Prostate gland (tissue), 2 donors: ENCODE measurements at regions of chr18 and their contacts with region 1.

Region 1: GRCh38 chr18:23918401-23919032 is 96.0 kb upstream of the TTC39C start:
- DNase-seq: peak; percentile 73
- H3K4me3 ChIP-seq: no peak overlapping the region
- H3K27ac ChIP-seq: no peak overlapping the region
- H3K4me1 ChIP-seq: no peaks in the 10 kb centered on the region
- H3K27me3 ChIP-seq: no peaks in the 10 kb centered on the region
- CTCF ChIP-seq: peak; percentile 72 to 85 (median 76)
- POLR2A ChIP-seq: no peak

Region 2: GRCh38 chr18:23578891-23579653 is 339.4 kb before region 1 on chr18:
- intact Hi-C with region 1: no loop called
- DNase-seq: no peak
- H3K4me3 ChIP-seq: no peak overlapping the region
- H3K27ac ChIP-seq: no peak overlapping the region
- H3K4me1 ChIP-seq: no peaks in the 10 kb centered on the region
- H3K27me3 ChIP-seq: no peaks in the 10 kb centered on the region
- CTCF ChIP-seq: no peak
- POLR2A ChIP-seq: no peak

Region 3: DNA sequence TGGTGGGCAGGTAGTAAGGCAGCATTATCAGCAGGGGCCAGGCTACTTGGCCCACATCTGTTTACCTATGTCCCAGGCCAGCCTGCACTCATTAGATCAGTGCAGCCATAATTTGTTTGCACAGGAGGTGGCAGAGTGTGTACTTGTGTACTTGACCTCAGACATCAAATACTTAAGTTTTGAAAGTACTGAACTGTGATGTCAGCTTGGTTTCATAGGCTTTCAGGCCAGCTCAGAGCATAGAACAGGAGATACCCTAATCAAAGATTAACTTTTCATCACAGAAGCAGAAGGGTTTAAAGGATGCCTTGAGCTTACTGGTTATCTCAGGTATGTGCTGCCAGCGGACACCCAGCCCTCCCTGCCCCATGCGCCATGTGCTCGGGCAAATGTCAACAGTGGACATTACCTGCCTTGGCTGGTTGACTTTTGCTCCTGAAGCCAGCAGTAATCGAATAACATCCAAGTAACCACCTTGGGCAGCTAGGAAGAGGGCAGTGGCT is 289.0 kb before region 1 on chr18:
- intact Hi-C with region 1: loop called (anchors 10 kb)
- DNase-seq: no peak
- H3K4me3 ChIP-seq: no peak overlapping the region
- H3K27ac ChIP-seq: no peak overlapping the region
- H3K4me1 ChIP-seq: peaks cover 6% of the 10 kb centered on the region
- H3K27me3 ChIP-seq: no peaks in the 10 kb centered on the region
- CTCF ChIP-seq: no peak
- POLR2A ChIP-seq: no peak

Region 4: DNA sequence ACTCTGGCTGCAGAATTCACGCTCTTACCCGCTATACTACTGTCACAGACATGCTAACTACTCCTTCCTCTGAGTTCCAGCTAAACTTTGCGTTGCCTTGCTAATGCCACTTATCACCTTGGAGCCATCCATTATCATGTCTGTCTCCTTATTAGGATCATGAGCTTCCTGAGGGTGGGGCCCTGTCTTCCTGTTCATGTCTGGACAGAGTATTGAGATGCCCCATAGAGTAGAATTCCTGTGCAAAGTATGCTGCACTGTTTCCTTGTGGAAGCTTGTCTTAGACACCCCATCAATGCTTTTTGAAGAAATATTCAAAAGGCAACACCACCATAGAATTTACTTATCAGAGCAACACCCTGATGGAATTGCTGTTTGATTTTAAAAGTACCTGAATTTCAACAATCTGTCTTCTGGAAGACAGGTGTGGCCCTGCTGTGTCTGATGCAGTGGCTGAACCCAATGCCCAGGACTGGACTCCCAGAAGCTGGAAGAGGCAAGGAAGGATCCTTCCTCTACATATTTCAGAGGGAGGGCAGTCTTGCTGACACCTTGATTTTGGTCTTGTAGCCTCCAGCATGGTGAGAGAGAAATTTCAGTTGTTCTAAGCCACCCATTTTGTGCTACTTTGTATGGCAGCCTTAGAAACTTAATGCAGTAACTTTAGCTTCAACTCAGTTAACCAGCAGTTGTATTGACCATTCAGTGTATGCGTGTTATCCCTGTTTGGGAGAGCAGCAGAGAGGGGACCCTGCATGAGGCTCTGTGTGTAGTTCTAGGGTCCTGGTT is 223.7 kb before region 1 on chr18:
- intact Hi-C with region 1: loop called (anchors 5 kb)
- DNase-seq: no peak
- H3K4me3 ChIP-seq: no peak overlapping the region
- H3K27ac ChIP-seq: no peak overlapping the region
- H3K4me1 ChIP-seq: no peaks in the 10 kb centered on the region
- H3K27me3 ChIP-seq: no peaks in the 10 kb centered on the region
- CTCF ChIP-seq: no peak
- POLR2A ChIP-seq: no peak

Region 5: DNA sequence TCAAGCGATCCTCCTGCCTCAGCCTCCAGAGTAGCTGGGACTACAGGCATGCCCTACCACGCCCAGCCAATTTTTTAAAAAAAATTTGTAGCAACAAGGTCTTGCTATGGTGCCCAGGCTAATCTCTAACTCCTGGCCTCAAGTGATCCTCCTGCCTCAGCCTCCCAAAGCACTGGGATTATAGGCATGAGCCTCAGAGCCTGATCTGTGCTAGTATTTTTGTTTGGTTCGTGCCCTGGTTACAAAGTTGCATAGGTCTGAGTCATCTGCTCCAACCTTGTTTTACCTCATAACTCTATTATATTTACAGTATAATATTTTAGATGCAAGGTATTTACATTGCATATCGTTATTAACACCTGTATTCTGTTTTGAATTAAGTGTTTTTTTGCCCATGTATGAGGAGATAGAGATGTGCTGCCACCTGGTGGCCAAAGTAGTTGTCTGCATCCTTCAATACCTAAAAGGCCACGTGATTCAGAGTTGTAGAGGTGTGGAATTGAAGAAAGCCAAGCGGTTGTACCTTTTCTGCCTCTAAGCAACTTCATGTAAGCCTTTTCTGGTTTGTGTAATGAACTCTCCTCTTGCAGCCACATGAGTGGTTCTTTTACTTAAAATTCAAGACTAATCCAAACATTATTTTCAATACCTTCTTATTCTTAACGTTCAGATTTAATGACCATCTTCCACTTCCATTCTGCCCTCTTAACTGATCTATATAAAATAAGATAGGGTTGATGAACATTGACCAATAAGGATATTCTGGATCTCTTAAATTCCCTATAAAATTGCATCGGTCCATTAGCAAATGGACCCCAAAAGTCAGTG is 200.4 kb after region 1 on chr18:
- intact Hi-C with region 1: loop called (anchors 5 kb)
- DNase-seq: peak; percentile 67
- H3K4me3 ChIP-seq: no peak overlapping the region
- H3K27ac ChIP-seq: no peak overlapping the region
- H3K4me1 ChIP-seq: no peaks in the 10 kb centered on the region
- H3K27me3 ChIP-seq: no peaks in the 10 kb centered on the region
- CTCF ChIP-seq: peak; percentile 85 to 98 (median 90)
- POLR2A ChIP-seq: no peak